ENCODE measurements at regions of chr6 and their contacts with region 1.

Region 1: DNA sequence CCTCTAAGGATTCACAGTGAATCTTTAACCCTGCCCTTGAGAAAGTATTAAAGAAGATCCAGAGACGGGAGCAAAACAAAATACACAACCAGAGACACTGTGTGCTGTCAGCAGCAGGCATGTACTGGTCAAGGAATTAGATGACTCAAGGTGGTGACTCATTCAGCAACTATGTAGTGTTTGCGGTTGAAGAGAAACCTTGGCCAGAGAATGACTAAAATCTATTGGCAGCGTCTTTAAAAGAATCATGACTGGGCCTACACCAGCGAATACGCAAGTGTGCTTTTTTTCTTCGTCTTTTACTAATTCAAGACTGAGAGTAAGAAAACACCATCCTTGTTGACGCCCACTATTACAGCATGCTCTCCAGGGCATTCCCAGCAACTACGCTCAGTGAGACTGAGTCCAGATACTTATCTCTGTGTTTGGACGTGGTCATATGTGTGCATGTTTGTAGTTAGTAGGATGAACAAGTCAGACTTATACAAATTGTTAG is 72.4 kb upstream of the BACH2 start:
- DNase-seq: peak; percentile 82 to 86
- H3K4me3 ChIP-seq: no peak overlapping the region
- H3K27ac ChIP-seq: peak overlapping the region; percentile 35 to 38
- H3K4me1 ChIP-seq: peaks cover 0 to 15% (median 5%) of the 10 kb centered on the region in 4 donors
- H3K27me3 ChIP-seq: no peaks in the 10 kb centered on the region
- CTCF ChIP-seq: no peak

Region 2: DNA sequence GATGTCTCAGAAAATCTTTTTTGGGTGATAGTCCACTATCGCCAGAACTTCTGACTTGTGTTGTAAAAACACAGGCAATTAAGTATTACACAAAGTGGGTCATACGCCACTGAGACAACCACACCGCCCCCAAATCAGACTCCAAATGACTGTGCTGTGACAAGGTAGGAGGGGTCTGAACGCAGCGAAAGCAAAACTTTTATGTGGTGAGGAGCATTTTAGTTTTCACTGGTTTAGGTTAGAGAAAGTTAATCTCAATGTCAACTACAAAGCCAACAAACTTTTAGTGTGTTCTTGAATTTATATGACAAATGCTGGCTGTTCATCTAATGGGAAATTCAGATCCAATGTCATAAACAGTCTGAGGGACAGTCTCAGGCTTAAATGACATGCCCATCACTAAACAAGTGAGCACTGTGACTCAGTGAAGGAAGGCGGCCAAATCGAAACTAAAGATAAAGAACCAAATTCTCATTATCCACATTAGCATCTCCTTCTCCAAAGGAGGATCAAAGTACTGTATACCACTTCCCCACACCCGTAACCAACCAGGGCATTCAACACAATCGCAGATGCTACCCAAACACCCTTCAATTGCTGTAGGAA is 288.1 kb before region 1 on chr6:
- intact Hi-C with region 1: no loop called
- DNase-seq: no peak
- H3K4me3 ChIP-seq: no peak overlapping the region
- H3K27ac ChIP-seq: no peak overlapping the region
- H3K4me1 ChIP-seq: no peaks in the 10 kb centered on the region
- H3K27me3 ChIP-seq: no peaks in the 10 kb centered on the region
- CTCF ChIP-seq: no peak

Region 3: DNA sequence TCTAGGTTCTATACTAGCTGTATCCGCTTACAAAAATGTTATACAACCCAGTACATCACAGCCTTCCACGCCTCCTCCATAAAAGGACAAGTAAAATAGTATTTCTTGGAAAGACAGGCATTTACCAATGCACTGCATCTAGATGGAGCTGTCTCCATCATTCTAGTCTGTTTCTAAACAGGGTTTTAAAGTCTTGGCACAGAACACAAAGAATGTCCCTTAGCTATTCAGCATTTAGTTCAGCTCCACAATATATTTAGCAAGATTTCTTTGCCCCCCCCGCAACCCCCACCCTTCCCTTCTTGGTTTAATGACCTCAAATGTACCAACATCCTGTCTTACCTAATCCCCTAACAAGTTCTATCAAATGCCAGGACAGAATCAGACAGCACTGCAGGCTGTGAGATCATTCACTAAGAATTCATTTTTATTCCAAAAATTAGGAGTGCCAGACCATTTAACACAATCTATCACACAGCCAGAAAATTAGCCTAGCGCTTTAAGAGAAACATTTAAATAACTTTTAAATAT is 271.0 kb before region 1 on chr6:
- intact Hi-C with region 1: loop called (anchors 5 kb)
- DNase-seq: peak; percentile 91 to 95
- H3K4me3 ChIP-seq: no peak overlapping the region
- H3K27ac ChIP-seq: peak overlapping the region; percentile 70 to 83
- H3K4me1 ChIP-seq: peaks cover 0 to 53% (median 27%) of the 10 kb centered on the region in 4 donors
- H3K27me3 ChIP-seq: no peaks in the 10 kb centered on the region
- CTCF ChIP-seq: peak; percentile 43 to 52

Region 4: GRCh38 chr6:90305800-90306448 is 63.1 kb before region 1 on chr6:
- intact Hi-C with region 1: no loop called
- DNase-seq: no peak
- H3K4me3 ChIP-seq: no peak overlapping the region
- H3K27ac ChIP-seq: no peak overlapping the region
- H3K4me1 ChIP-seq: no peaks in the 10 kb centered on the region
- H3K27me3 ChIP-seq: peaks cover 0 to 6% of the 10 kb centered on the region in 2 donors
- CTCF ChIP-seq: no peak